Mammary epithelial cell (primary cell): ENCODE measurements at regions of chr1 and their contacts with region 1.

Region 1: GRCh38 chr1:225474986-225475820 is 47.4 kb upstream of the LBR start:
- DNase-seq: peak; percentile 48
- H3K4me3 ChIP-seq: peak overlapping the region in 1 of 3 experiments; percentile 28
- H3K27ac ChIP-seq: no peak overlapping the region
- H3K4me1 ChIP-seq: peaks cover 5% of the 10 kb centered on the region
- H3K27me3 ChIP-seq: no peaks in the 10 kb centered on the region
- CTCF ChIP-seq: peak; percentile 99 to 100

Region 2: GRCh38 chr1:225554216-225554812 is 79.1 kb after region 1 on chr1:
- CTCF ChIA-PET with region 1: no interaction called
- dilution Hi-C with region 1: no loop called
- in situ Hi-C with region 1: no loop called
- intact Hi-C with region 1: loop called (anchors 5 kb)
- DNase-seq: no peak
- H3K4me3 ChIP-seq: no peak overlapping the region
- H3K27ac ChIP-seq: no peak overlapping the region
- H3K4me1 ChIP-seq: no peaks in the 10 kb centered on the region
- H3K27me3 ChIP-seq: no peaks in the 10 kb centered on the region
- CTCF ChIP-seq: peak; percentile 52 to 57

Region 3: GRCh38 chr1:225694151-225694603 is 219.0 kb after region 1 on chr1:
- CTCF ChIA-PET with region 1: no interaction called
- dilution Hi-C with region 1: no loop called
- in situ Hi-C with region 1: no loop called
- intact Hi-C with region 1: no loop called
- DNase-seq: no peak
- H3K4me3 ChIP-seq: no peak overlapping the region
- H3K27ac ChIP-seq: no peak overlapping the region
- H3K4me1 ChIP-seq: peaks cover under 1% of the 10 kb centered on the region
- H3K27me3 ChIP-seq: no peaks in the 10 kb centered on the region
- CTCF ChIP-seq: no peak

Region 4: GRCh38 chr1:225772323-225772768 is 297.1 kb after region 1 on chr1:
- CTCF ChIA-PET with region 1: no interaction called
- dilution Hi-C with region 1: no loop called
- in situ Hi-C with region 1: loop called (anchors 5 to 10 kb)
- intact Hi-C with region 1: loop called (anchors 1 kb)
- DNase-seq: peak; percentile 87
- H3K4me3 ChIP-seq: peak overlapping the region in 1 of 3 experiments; percentile 18
- H3K27ac ChIP-seq: no peak overlapping the region
- H3K4me1 ChIP-seq: peaks cover 40% of the 10 kb centered on the region
- H3K27me3 ChIP-seq: no peaks in the 10 kb centered on the region
- CTCF ChIP-seq: peak; percentile 94 to 96

Region 5: DNA sequence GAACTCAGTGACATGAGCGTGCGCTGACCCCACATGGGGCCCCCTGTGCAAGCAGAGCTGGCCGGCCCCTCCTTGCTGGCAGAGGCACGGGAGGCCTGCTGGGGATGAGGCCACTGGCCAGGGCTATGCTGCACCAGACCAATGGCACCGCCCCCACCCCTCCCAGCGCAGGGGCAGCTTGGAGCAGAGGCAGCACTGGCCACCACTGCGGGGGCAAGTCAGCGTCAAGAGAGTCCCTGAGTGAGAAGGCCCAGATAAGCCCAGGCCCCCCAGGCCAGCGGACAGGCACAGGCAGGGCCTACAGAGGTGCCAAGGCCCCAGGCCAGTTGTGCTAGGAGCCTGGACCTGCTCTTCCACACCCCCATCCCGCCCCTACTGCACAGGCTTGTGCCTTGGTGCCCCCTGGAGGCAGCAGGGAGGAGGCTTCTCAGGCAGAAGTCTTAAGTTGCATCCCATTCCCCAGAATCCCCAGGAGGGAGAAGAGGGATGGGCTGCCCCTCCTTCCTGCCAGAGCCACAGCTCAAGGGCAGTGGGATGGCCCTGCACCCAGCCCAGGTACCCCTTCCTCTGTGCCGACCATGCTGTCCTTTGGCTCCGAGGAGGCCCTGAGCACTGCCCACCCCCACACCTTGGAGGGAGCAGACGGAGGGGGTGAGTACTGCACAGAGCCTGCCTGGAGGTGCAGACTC is 370.5 kb after region 1 on chr1:
- CTCF ChIA-PET with region 1: no interaction called
- dilution Hi-C with region 1: no loop called
- in situ Hi-C with region 1: no loop called
- intact Hi-C with region 1: loop called (anchors 1 kb)
- DNase-seq: peak; percentile 56
- H3K4me3 ChIP-seq: no peak overlapping the region
- H3K27ac ChIP-seq: no peak overlapping the region
- H3K4me1 ChIP-seq: peaks cover 7% of the 10 kb centered on the region
- H3K27me3 ChIP-seq: no peaks in the 10 kb centered on the region
- CTCF ChIP-seq: peak; percentile 67 to 89

Region 6: GRCh38 chr1:225987491-225988316 is 512.5 kb after region 1 on chr1:
- CTCF ChIA-PET with region 1: interaction called, 3 read pairs
- dilution Hi-C with region 1: loop called (anchors 25 kb)
- in situ Hi-C with region 1: loop called (anchors 5 kb)
- intact Hi-C with region 1: loop called (anchors 1 kb)
- DNase-seq: peak; percentile 30
- H3K4me3 ChIP-seq: no peak overlapping the region
- H3K27ac ChIP-seq: no peak overlapping the region
- H3K4me1 ChIP-seq: no peaks in the 10 kb centered on the region
- H3K27me3 ChIP-seq: no peaks in the 10 kb centered on the region
- CTCF ChIP-seq: peak; percentile 69 to 78

Region 7: DNA sequence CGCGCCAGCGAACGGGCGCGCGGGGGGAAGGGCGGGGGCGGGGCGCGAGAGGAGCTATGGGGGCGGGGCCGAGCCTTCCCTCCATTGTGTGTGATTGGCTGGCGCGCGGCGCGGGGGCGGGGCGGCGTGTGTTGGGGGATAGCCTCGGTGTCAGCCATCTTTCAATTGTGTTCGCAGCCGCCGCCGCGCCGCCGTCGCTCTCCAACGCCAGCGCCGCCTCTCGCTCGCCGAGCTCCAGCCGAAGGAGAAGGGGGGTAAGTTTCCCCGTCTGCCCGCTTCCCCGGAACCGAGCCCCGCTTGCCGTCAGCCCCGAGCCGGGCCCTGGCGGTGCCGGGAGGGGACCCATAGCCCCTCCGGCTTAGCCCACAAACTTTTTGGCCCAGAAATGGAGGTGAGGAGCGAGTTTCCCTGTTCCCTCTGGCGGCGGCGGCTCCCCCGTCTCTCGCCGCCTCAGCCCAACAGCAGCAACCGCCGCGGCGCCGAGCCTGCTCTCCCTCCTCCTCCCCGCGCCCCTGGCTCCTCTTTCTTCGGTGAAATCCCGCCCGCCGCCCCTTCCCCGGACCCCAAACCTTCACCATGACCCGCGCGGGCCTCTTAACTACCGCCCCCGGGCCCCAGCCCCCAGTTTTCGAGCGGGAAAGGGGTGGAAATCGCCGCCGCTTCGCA is 587.5 kb after region 1 on chr1 and contains the start of gene H3-3A:
- CTCF ChIA-PET with region 1: no interaction called
- dilution Hi-C with region 1: no loop called
- in situ Hi-C with region 1: no loop called
- intact Hi-C with region 1: loop called (anchors 1 kb)
- DNase-seq: peak; percentile 92
- H3K4me3 ChIP-seq: peak within 1 kb of the TSS; percentile 86 to 99 (median 91)
- H3K27ac ChIP-seq: peak within 1 kb of the TSS; percentile 86
- H3K4me1 ChIP-seq: peaks cover 19% of the 10 kb centered on the region
- H3K27me3 ChIP-seq: no peaks in the 10 kb centered on the region
- CTCF ChIP-seq: peak in 1 of 2 donors; percentile 13
- total RNA-seq, gene H3-3A: 209 to 262 TPM

Region 8: GRCh38 chr1:226195144-226195543 is 719.9 kb after region 1 on chr1:
- CTCF ChIA-PET with region 1: no interaction called
- dilution Hi-C with region 1: no loop called
- in situ Hi-C with region 1: no loop called
- intact Hi-C with region 1: loop called (anchors 10 kb)
- DNase-seq: no peak
- H3K4me3 ChIP-seq: no peak overlapping the region
- H3K27ac ChIP-seq: no peak overlapping the region
- H3K4me1 ChIP-seq: no peaks in the 10 kb centered on the region
- H3K27me3 ChIP-seq: no peaks in the 10 kb centered on the region
- CTCF ChIP-seq: no peak